Activated CD4-positive, alpha-beta T cell treated with anti-CD3 and anti-CD28 coated beads for 36 hours (primary cell): ENCODE measurements at regions of chr2 and their contacts with region 1.

Region 1: DNA sequence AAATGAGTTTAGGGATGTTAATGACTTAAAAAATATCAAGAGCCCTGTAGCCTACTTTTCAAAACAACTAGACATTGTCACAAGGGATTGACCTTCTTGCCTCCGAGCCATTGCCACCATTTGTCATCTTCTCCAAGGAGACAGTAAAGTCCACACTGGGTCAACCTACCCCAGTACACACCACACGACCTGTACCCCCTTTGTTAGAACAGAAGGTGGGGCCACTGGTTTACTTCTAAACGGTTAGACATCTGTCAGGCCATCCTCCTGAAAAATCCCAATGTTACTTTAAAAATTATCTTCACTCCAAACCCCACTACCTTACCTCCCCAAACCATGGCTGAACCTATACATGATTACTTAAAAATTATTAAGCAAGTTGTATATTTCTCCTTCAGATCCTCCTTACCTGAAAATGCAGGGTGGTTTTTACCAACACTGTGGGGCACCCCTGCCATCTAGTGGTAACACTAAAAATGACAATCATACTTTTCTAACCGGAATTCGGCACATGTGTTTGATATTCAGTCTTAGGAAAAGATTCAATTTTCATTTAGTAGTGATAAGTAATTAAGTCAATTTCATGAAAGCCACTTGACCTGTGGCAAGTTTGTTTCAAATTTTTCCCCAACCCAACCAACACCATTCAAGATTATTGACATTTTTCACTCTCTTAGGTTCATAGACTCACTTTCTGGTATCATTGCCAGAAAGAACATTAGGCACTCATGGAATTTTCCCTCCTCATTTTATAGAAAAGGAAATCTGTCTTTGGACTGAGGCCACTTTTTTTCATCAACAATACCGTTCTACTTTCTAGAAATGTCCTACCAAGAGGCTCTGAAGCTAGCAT is 265.3 kb upstream of the PKDCC start:
- DNase-seq: peak; percentile 52
- ATAC-seq: no peak
- H3K4me3 Mint-ChIP-seq: no peak overlapping the region
- H3K27ac Mint-ChIP-seq: no peak overlapping the region
- H3K4me1 Mint-ChIP-seq: no peaks in the 10 kb centered on the region
- H3K27me3 Mint-ChIP-seq: peaks cover 6% of the 10 kb centered on the region

Region 2: DNA sequence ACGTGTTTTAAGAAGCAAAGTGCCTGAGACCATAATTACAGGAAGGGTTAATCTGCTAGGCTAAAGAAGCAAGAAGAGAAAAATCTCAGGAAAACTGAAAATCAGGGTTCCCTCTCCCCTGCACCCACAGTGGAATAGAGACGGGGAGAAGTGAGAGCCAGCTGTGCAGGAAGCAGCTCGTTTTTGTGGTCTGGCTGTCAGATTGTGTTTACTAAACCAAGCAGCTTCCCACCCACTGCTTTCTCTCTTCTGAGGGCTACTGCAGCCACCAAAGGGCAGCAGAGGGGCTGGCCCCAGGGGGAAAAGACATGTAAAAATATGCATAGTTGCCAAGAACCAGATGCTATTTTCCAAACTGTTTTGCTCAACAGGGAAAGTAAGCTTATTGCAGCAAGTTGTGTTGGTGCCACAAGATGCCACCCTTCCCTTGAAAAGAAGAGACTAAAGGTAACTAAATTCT is 1930.9 kb before region 1 on chr2:
- CTCF ChIA-PET with region 1: no interaction called
- POLR2A ChIA-PET with region 1: no interaction called
- intact Hi-C with region 1: loop called in 1 of 2 experiments (anchors 5 kb)
- DNase-seq: no peak
- ATAC-seq: no peak
- H3K4me3 Mint-ChIP-seq: no peak overlapping the region
- H3K27ac Mint-ChIP-seq: no peak overlapping the region
- H3K4me1 Mint-ChIP-seq: peaks cover 8% of the 10 kb centered on the region
- H3K27me3 Mint-ChIP-seq: peaks cover 16% of the 10 kb centered on the region

Region 3: DNA sequence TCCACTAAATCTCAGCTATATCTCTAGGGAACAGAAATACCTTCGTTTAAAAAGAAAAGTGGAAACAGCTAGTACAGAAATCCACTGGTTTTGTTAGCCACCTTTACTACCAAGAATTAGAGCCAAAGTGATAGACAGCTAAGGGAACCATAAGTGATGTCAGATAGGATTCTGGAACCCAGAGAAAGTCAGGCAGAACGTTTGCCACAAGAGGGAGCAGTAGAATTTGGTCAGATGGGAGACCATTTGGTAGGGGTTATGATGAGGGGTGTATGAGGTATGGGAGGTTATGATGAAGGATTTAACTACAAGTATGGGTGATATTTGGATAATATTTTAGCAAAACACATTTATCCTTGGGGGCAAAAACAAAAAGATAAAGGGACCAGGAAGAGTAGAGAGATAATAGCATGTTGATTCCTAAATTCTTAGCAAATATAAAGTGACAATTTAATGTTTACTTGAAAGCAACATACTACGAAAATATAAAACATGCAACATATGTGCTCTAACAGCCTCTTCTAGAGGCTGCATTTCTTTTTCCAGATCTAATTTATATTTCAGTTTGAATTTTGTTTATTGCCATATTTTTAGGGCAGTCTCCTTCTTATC is 1334.0 kb before region 1 on chr2:
- CTCF ChIA-PET with region 1: no interaction called
- POLR2A ChIA-PET with region 1: no interaction called
- intact Hi-C with region 1: loop called in 1 of 2 experiments (anchors 5 kb)
- DNase-seq: peak; percentile 31
- ATAC-seq: no peak
- H3K4me3 Mint-ChIP-seq: no peak overlapping the region
- H3K27ac Mint-ChIP-seq: no peak overlapping the region
- H3K4me1 Mint-ChIP-seq: peaks cover 22% of the 10 kb centered on the region
- H3K27me3 Mint-ChIP-seq: peaks cover 39% of the 10 kb centered on the region

Region 4: GRCh38 chr2:41187376-41188122 is 595.0 kb before region 1 on chr2:
- CTCF ChIA-PET with region 1: no interaction called
- POLR2A ChIA-PET with region 1: no interaction called
- intact Hi-C with region 1: no loop called
- DNase-seq: no peak
- ATAC-seq: no peak
- H3K4me3 Mint-ChIP-seq: no peak overlapping the region
- H3K27ac Mint-ChIP-seq: no peak overlapping the region
- H3K4me1 Mint-ChIP-seq: no peaks in the 10 kb centered on the region
- H3K27me3 Mint-ChIP-seq: no peaks in the 10 kb centered on the region

Region 5: GRCh38 chr2:41414486-41415230 is 367.9 kb before region 1 on chr2:
- CTCF ChIA-PET with region 1: interaction called, 4 read pairs
- POLR2A ChIA-PET with region 1: no interaction called
- intact Hi-C with region 1: loop called (anchors 1 to 10 kb)
- DNase-seq: peak; percentile 4
- ATAC-seq: no peak
- H3K4me3 Mint-ChIP-seq: no peak overlapping the region
- H3K27ac Mint-ChIP-seq: no peak overlapping the region
- H3K4me1 Mint-ChIP-seq: no peaks in the 10 kb centered on the region
- H3K27me3 Mint-ChIP-seq: no peaks in the 10 kb centered on the region